A673 (cell line): ENCODE measurements at regions of chr14 and their contacts with region 1.

Region 1: GRCh38 chr14:50121506-50121905 is 5.1 kb upstream of the VCPKMT start:
- DNase-seq: no peak
- H3K4me3 ChIP-seq: no peak overlapping the region
- H3K27ac ChIP-seq: no peak overlapping the region
- H3K4me1 ChIP-seq: peaks cover 6% of the 10 kb centered on the region
- H3K27me3 ChIP-seq: no peaks in the 10 kb centered on the region
- CTCF ChIP-seq: no peak

Region 2: GRCh38 chr14:50109342-50109741 is 12.2 kb before region 1 on chr14:
- CTCF ChIA-PET with region 1: no interaction called
- POLR2A ChIA-PET with region 1: no interaction called
- intact Hi-C with region 1: no loop called
- DNase-seq: peak; percentile 40
- H3K4me3 ChIP-seq: no peak overlapping the region
- H3K27ac ChIP-seq: no peak overlapping the region
- H3K4me1 ChIP-seq: no peaks in the 10 kb centered on the region
- H3K27me3 ChIP-seq: no peaks in the 10 kb centered on the region
- CTCF ChIP-seq: peak; percentile 37

Region 3: DNA sequence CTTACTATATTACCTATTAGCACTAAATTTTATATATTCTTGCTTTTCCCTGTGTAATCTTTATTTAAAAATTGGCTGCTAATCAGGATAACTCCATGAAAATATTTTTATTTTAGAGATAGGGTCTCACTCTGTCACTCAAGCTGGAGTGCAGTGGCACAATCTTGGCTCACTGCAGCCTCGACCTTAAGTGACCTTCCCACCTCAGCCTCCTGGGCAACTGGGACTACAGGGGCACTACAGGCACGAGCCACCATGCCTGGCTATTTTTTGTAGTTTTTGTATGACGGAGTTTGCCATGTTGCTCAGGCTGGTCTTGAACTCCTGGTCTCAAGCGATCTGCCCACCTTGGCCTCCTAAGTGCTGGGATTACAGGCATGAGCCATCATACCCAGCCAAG is 27.3 kb after region 1 on chr14:
- CTCF ChIA-PET with region 1: no interaction called
- POLR2A ChIA-PET with region 1: interaction called, 11 read pairs
- intact Hi-C with region 1: no loop called
- DNase-seq: no peak
- H3K4me3 ChIP-seq: no peak overlapping the region
- H3K27ac ChIP-seq: no peak overlapping the region
- H3K4me1 ChIP-seq: no peaks in the 10 kb centered on the region
- H3K27me3 ChIP-seq: no peaks in the 10 kb centered on the region
- CTCF ChIP-seq: no peak

Region 4: GRCh38 chr14:50272503-50272902 is 151.0 kb after region 1 on chr14:
- CTCF ChIA-PET with region 1: no interaction called
- POLR2A ChIA-PET with region 1: no interaction called
- intact Hi-C with region 1: no loop called
- DNase-seq: no peak
- H3K4me3 ChIP-seq: no peak overlapping the region
- H3K27ac ChIP-seq: no peak overlapping the region
- H3K4me1 ChIP-seq: no peaks in the 10 kb centered on the region
- H3K27me3 ChIP-seq: no peaks in the 10 kb centered on the region
- CTCF ChIP-seq: no peak

Region 5: DNA sequence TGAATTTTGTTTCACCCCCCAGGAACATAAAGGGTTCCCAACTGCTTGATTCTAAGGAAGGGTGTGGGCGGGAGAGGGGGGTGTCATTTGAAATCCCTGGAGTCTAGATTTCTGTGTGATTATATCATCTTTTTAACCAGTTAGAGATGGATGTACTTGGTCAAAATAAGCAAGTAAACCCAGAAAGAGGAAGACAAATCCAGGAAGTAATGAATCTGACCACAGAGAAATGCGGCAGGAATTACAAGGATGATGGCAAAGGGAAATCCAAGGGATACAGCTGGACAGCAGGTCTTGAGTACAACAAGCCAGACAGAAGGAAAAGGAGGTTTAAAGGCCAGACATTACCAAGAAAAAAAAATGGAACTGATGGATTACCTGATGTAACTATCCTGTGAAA is 229.5 kb after region 1 on chr14:
- CTCF ChIA-PET with region 1: no interaction called
- POLR2A ChIA-PET with region 1: no interaction called
- intact Hi-C with region 1: no loop called
- DNase-seq: peak; percentile 17
- H3K4me3 ChIP-seq: no peak overlapping the region
- H3K27ac ChIP-seq: no peak overlapping the region
- H3K4me1 ChIP-seq: no peaks in the 10 kb centered on the region
- H3K27me3 ChIP-seq: no peaks in the 10 kb centered on the region
- CTCF ChIP-seq: no peak